A549 (cell line): ENCODE measurements at regions of chr22 and their contacts with region 1.

Region 1: DNA sequence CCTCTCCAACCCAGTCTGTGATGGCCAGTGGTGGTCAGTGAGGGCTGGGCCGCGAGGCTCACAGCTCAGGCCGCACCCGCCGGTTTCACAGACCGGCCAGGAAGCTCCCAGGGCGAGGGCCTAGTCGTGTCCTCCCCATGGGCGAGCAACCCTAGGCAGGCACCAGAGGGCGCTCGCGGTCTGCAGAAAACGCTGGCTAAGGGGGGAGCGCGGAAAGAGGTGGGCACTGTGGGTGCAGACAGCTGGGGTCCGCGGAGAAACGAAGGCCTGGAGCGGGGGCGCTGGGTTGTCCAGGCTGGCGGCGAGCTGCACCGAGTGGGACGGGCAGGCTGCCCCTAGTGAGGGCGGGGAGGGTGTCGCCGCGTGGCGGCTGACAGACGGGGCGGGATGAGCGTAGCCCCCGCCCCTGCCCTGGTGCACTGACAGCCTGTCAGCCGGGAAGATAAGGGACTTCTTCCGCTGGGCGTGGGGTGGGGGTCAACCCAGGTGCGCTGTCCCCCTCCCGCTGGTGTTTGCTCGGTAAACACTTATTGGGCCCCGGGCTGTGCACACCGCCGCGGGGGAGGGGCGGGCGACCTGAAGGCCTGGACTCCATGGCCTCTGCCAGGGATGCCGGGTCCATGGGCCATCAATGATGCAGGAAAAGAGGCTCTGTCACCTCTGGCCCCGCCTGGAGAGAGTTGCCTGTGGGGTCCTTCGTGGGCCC is 7.5 kb downstream of the GP1BB start:
- DNase-seq: peak; percentile 58 to 73
- ATAC-seq: peak; percentile 80 to 95
- H3K4me3 ChIP-seq: peak overlapping the region; percentile 47
- H3K27ac ChIP-seq: peak overlapping the region; percentile 50 to 79; a peak in 5 of 6 replicates
- H3K4me1 ChIP-seq: no peaks in the 10 kb centered on the region
- CTCF ChIP-seq: peak; percentile 79
- EP300 ChIP-seq: no peak
- POLR2A ChIP-seq: no peak
- RAD21 ChIP-seq: peak; percentile 92 to 97

Region 2: GRCh38 chr22:19717691-19718455 is 12.9 kb before region 1 on chr22:
- CTCF ChIA-PET with region 1: interaction called, 19 read pairs
- POLR2A ChIA-PET with region 1: no interaction called
- DNase-seq: peak; percentile 55 to 65
- ATAC-seq: peak; percentile 67 to 88
- H3K4me3 ChIP-seq: peak overlapping the region; percentile 45
- H3K27ac ChIP-seq: peak overlapping the region; percentile 80 to 92
- H3K4me1 ChIP-seq: peaks cover 9% of the 10 kb centered on the region; the same call in 1 of the 3 replicates
- CTCF ChIP-seq: peak; percentile 82
- EP300 ChIP-seq: no peak
- POLR2A ChIP-seq: no peak
- RAD21 ChIP-seq: peak; percentile 46 to 79; a peak in 4 of 5 replicates

Region 3: GRCh38 chr22:19756288-19757128 is 25.7 kb after region 1 on chr22:
- CTCF ChIA-PET with region 1: interaction called, 44 read pairs
- POLR2A ChIA-PET with region 1: no interaction called
- DNase-seq: peak; percentile 54 to 72
- ATAC-seq: peak; percentile 72 to 81
- H3K4me3 ChIP-seq: peak overlapping the region; percentile 42
- H3K27ac ChIP-seq: peak overlapping the region; percentile 63 to 85; a peak in 5 of 6 replicates
- H3K4me1 ChIP-seq: peaks cover 6% of the 10 kb centered on the region
- CTCF ChIP-seq: peak; percentile 37
- EP300 ChIP-seq: no peak
- POLR2A ChIP-seq: no peak
- RAD21 ChIP-seq: peak; percentile 47 to 58

Region 4: GRCh38 chr22:19862619-19863246 is 131.9 kb after region 1 on chr22:
- CTCF ChIA-PET with region 1: interaction called, 11 read pairs
- POLR2A ChIA-PET with region 1: no interaction called
- DNase-seq: no peak
- ATAC-seq: no peak
- H3K4me3 ChIP-seq: no peak overlapping the region
- H3K27ac ChIP-seq: no peak overlapping the region
- H3K4me1 ChIP-seq: no peaks in the 10 kb centered on the region
- CTCF ChIP-seq: no peak
- EP300 ChIP-seq: no peak
- POLR2A ChIP-seq: no peak
- RAD21 ChIP-seq: no peak

Region 5: GRCh38 chr22:19891317-19892256 is 160.8 kb after region 1 on chr22:
- CTCF ChIA-PET with region 1: interaction called, 25 read pairs
- POLR2A ChIA-PET with region 1: no interaction called
- DNase-seq: no peak
- ATAC-seq: peak in 1 of 2 experiments; percentile 39; a peak in 2 of 6 replicates
- H3K4me3 ChIP-seq: no peak overlapping the region
- H3K27ac ChIP-seq: peak overlapping the region in 1 of 2 experiments; percentile 62; a peak in 3 of 6 replicates
- H3K4me1 ChIP-seq: peaks cover 14% of the 10 kb centered on the region
- CTCF ChIP-seq: no peak
- EP300 ChIP-seq: no peak
- POLR2A ChIP-seq: no peak
- RAD21 ChIP-seq: no peak

Region 6: GRCh38 chr22:19909350-19910179 is 178.8 kb after region 1 on chr22:
- CTCF ChIA-PET with region 1: interaction called, 215 read pairs
- POLR2A ChIA-PET with region 1: interaction called, 4 read pairs
- DNase-seq: peak; percentile 60 to 68
- ATAC-seq: peak; percentile 92 to 99
- H3K4me3 ChIP-seq: no peak overlapping the region
- H3K27ac ChIP-seq: peak overlapping the region in 1 of 2 experiments; percentile 66; a peak in 3 of 6 replicates
- H3K4me1 ChIP-seq: no peaks in the 10 kb centered on the region
- CTCF ChIP-seq: peak; percentile 75
- EP300 ChIP-seq: no peak
- POLR2A ChIP-seq: no peak
- RAD21 ChIP-seq: peak; percentile 92 to 94

Region 7: GRCh38 chr22:19955241-19956128 is 224.7 kb after region 1 on chr22:
- CTCF ChIA-PET with region 1: interaction called, 15 read pairs
- POLR2A ChIA-PET with region 1: no interaction called
- DNase-seq: no peak
- ATAC-seq: no peak
- H3K4me3 ChIP-seq: no peak overlapping the region
- H3K27ac ChIP-seq: no peak overlapping the region
- H3K4me1 ChIP-seq: peaks cover 11% of the 10 kb centered on the region; the same call in 1 of the 3 replicates
- CTCF ChIP-seq: no peak
- EP300 ChIP-seq: no peak
- POLR2A ChIP-seq: no peak
- RAD21 ChIP-seq: no peak